Activated CD4-positive, alpha-beta memory T cell treated with anti-CD3 and anti-CD28 coated beads for 36 hours (primary cell): ENCODE measurements at regions of chr18 and their contacts with region 1.

Region 1: GRCh38 chr18:62844850-62845643 is 129.7 kb downstream of the PHLPP1 start:
- DNase-seq: peak; percentile 69
- H3K4me3 Mint-ChIP-seq: peak overlapping the region; percentile 45
- H3K27ac Mint-ChIP-seq: peak overlapping the region; percentile 90
- H3K4me1 Mint-ChIP-seq: peaks cover 41% of the 10 kb centered on the region
- H3K27me3 Mint-ChIP-seq: no peaks in the 10 kb centered on the region

Region 2: GRCh38 chr18:62584241-62585120 is 260.6 kb before region 1 on chr18:
- CTCF ChIA-PET with region 1: interaction called, 4 read pairs
- POLR2A ChIA-PET with region 1: no interaction called
- intact Hi-C with region 1: loop called (anchors 1 kb)
- DNase-seq: peak; percentile 91
- H3K4me3 Mint-ChIP-seq: no peak overlapping the region
- H3K27ac Mint-ChIP-seq: peak overlapping the region; percentile 94
- H3K4me1 Mint-ChIP-seq: peaks cover 39% of the 10 kb centered on the region
- H3K27me3 Mint-ChIP-seq: no peaks in the 10 kb centered on the region

Region 3: DNA sequence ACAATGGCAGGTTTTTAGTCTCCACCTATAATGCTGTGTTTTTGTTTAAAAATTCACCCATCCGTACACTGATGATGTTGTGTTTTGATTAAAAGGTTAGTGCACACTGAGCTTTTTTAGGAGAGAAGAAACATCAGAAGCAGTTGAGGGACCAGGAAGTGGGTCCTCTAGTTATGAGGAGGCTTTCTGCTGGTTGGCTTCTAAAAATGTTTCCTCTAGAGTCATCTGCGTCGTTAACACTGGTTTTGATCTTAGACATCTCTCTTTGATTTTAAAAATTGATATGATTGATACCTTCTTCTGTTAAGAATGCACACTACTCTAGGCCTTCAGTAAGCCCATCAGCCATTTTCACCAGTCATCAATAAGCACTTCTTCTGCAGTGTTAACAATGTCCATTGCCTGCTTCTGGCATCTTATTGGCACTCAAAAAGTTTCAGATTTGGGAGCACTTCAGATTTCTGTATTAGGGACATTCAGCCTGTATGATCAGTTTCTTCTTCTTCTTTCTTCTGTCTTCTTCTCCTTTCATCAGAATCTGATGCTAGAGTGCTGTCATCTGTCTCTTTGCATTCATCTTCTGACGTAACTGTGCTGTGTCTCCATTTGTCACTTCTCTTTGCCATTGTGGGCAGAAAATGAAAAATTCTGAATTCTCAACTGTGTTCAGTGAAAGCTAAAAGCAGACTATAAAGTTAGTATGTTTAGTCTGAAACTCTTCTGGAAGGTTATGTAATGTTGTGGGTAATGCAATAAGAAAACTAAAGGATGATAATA is 73.4 kb before region 1 on chr18:
- CTCF ChIA-PET with region 1: no interaction called
- POLR2A ChIA-PET with region 1: no interaction called
- intact Hi-C with region 1: loop called (anchors 1 kb)
- DNase-seq: no peak
- H3K4me3 Mint-ChIP-seq: no peak overlapping the region
- H3K27ac Mint-ChIP-seq: peak overlapping the region; percentile 43
- H3K4me1 Mint-ChIP-seq: peaks cover 20% of the 10 kb centered on the region
- H3K27me3 Mint-ChIP-seq: no peaks in the 10 kb centered on the region

Region 4: DNA sequence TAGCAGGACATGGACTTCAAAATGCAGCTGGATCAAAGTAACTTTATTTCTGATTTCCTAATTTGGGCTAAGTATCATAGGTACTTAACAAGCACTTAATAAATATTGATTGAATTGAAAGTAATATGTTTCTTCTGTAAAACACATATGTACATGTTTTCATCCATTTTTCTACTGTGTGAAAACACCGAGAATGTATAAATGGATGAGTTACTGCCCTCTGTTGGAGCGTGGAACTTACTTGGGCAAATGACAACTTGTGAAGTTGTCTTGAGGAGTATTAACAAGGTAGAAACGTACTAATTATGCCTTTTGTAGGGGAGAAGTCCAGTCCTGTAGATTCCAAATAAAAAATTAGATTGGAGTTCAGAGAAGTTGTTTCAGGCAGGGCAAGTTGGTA is 42.5 kb before region 1 on chr18:
- CTCF ChIA-PET with region 1: no interaction called
- POLR2A ChIA-PET with region 1: no interaction called
- intact Hi-C with region 1: no loop called
- DNase-seq: no peak
- H3K4me3 Mint-ChIP-seq: no peak overlapping the region
- H3K27ac Mint-ChIP-seq: no peak overlapping the region
- H3K4me1 Mint-ChIP-seq: no peaks in the 10 kb centered on the region
- H3K27me3 Mint-ChIP-seq: no peaks in the 10 kb centered on the region

Region 5: GRCh38 chr18:62868645-62869044 is 23.6 kb after region 1 on chr18:
- CTCF ChIA-PET with region 1: no interaction called
- POLR2A ChIA-PET with region 1: interaction called, 3 read pairs
- intact Hi-C with region 1: loop called (anchors 1 kb)
- DNase-seq: no peak
- H3K4me3 Mint-ChIP-seq: no peak overlapping the region
- H3K27ac Mint-ChIP-seq: peak overlapping the region; percentile 82
- H3K4me1 Mint-ChIP-seq: peaks cover 12% of the 10 kb centered on the region
- H3K27me3 Mint-ChIP-seq: no peaks in the 10 kb centered on the region

Region 6: GRCh38 chr18:63216516-63217311 is 371.7 kb after region 1 on chr18:
- CTCF ChIA-PET with region 1: no interaction called
- POLR2A ChIA-PET with region 1: no interaction called
- intact Hi-C with region 1: loop called (anchors 10 kb)
- DNase-seq: peak; percentile 50
- H3K4me3 Mint-ChIP-seq: peak overlapping the region; percentile 64
- H3K27ac Mint-ChIP-seq: peak overlapping the region; percentile 93
- H3K4me1 Mint-ChIP-seq: peaks cover 95% of the 10 kb centered on the region
- H3K27me3 Mint-ChIP-seq: no peaks in the 10 kb centered on the region